Naive thymus-derived CD4-positive, alpha-beta T cell (primary cell): ENCODE measurements at regions of chr2 and their contacts with region 1.

Region 1: DNA sequence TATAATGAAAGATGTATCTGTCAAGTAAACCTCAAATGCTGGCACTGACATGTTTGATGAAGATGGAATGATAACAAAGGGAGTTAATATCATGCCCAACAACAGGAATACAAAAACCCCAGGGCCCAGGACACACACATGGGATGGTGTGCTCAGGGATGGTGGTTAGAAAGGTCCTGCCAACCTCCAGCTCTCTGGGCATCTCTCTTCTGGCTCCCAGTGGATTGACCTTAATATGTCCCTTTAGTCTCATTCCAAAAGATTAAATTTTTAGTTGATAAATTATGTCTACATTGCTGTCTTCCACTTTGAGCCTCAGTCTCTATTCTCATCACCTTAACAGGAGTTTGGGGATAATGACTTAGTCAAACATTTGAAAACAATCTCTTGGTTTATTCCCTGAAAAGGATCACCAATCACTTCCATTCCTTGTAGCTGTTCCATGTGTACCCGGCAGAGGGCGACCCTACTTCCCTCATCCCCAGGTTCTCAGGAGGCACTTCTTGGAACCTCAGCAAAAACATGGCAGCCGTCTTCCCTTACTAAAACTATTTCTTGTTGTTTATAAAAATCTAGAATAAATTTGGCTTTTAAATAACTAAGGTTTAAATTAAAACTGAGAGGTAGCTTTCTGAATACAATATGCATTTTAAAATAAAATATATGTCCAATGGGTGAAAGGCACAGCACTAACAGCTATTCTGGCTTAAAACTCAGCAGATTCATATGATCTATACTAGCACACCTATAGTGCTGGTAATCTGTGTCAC is 29.6 kb downstream of the MCEE start:
- DNase-seq: peak in 8 of 9 donors; percentile 3 to 44 (median 16)
- ATAC-seq: peak; percentile 79
- H3K4me3 ChIP-seq: no peak overlapping the region
- H3K4me3 Mint-ChIP-seq: no peak overlapping the region
- H3K27ac ChIP-seq: no peak overlapping the region
- H3K27ac Mint-ChIP-seq: no peak overlapping the region
- H3K4me1 ChIP-seq: no peaks in the 10 kb centered on the region
- H3K4me1 Mint-ChIP-seq: peaks cover 0 to 7% (median 0%) of the 10 kb centered on the region in 7 donors
- H3K27me3 ChIP-seq: no peaks in the 10 kb centered on the region
- H3K27me3 Mint-ChIP-seq: peaks cover 0 to 13% (median 4%) of the 10 kb centered on the region in 5 donors

Region 2: DNA sequence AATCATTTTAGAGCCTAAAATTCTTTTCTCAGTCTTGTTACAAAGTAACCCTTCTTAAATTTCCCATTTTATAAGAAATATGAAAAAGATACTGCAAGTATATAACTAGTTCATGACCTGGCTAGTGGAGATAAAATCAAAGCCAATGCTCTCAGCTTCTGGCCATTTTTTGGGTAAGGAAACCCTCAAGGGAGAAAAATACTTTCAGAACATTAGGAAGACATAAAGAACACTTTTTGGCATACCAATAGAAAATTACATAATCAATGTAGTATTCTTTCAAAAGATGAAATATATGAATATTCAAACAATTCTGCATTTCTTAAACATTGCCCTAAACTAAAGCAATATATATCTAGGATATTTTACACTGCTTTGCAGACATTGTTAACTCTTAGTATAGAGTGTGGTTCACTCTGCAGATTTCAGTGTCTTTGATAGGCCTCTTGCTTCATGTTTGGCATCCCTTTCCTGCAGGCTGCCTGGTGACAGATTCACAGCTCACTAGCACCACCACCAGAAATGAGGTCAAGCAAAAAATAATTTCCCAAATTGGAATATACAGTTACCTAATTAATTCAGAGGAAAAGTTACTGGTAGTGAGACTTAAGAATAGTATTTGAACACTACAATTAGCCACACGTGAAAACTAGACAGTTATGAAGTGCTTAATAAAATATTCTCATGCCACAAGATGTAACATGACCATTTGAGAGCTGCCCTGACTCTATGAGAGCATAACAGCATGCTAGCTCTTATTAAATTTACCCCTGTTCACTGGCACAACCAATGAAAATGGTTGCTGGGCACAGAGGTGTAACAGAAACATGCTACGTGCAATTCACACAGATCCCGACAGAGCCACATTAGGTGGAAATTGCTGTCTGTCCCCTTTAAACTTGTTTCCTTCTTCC is 90.5 kb after region 1 on chr2:
- CTCF ChIA-PET with region 1: no interaction called
- POLR2A ChIA-PET with region 1: no interaction called
- intact Hi-C with region 1: loop called in 1 of 2 experiments (anchors 1 kb)
- DNase-seq: no peak
- ATAC-seq: no peak
- H3K4me3 ChIP-seq: no peak overlapping the region
- H3K4me3 Mint-ChIP-seq: no peak overlapping the region
- H3K27ac ChIP-seq: no peak overlapping the region
- H3K27ac Mint-ChIP-seq: no peak overlapping the region
- H3K4me1 ChIP-seq: no peaks in the 10 kb centered on the region
- H3K4me1 Mint-ChIP-seq: no peaks in the 10 kb centered on the region
- H3K27me3 ChIP-seq: no peaks in the 10 kb centered on the region
- H3K27me3 Mint-ChIP-seq: peaks cover 0 to 8% (median 0%) of the 10 kb centered on the region in 5 donors